ENCODE measurements at regions of chr6 and their contacts with region 1.

Region 1: GRCh38 chr6:108782179-108783041 is 65.8 kb upstream of the ARMC2 start:
- DNase-seq: peak; percentile 84
- ATAC-seq: peak; percentile 96
- H3K4me3 ChIP-seq: peak overlapping the region; percentile 43 to 78 (median 59)
- H3K4me3 Mint-ChIP-seq: peak overlapping the region; percentile 81
- H3K27ac ChIP-seq: no peak overlapping the region
- H3K27ac Mint-ChIP-seq: no peak overlapping the region
- H3K4me1 ChIP-seq: peaks cover 23 to 31% of the 10 kb centered on the region in 2 donors
- H3K4me1 Mint-ChIP-seq: peaks cover 25% of the 10 kb centered on the region
- H3K27me3 ChIP-seq: peaks cover 0 to 20% (median 8%) of the 10 kb centered on the region in 4 experiments
- H3K27me3 Mint-ChIP-seq: peaks cover 27% of the 10 kb centered on the region
- CTCF ChIP-seq: peak; percentile 84

Region 2: GRCh38 chr6:108541838-108542759 is 240.3 kb before region 1 on chr6:
- CTCF ChIA-PET with region 1: interaction called, 80 read pairs
- POLR2A ChIA-PET with region 1: no interaction called
- intact Hi-C with region 1: loop called (anchors 1 kb)
- DNase-seq: peak; percentile 87
- ATAC-seq: peak; percentile 84
- H3K4me3 ChIP-seq: no peak overlapping the region
- H3K4me3 Mint-ChIP-seq: no peak overlapping the region
- H3K27ac ChIP-seq: no peak overlapping the region
- H3K27ac Mint-ChIP-seq: no peak overlapping the region
- H3K4me1 ChIP-seq: peaks cover 15 to 17% of the 10 kb centered on the region in 2 donors
- H3K4me1 Mint-ChIP-seq: peaks cover 12% of the 10 kb centered on the region
- H3K27me3 ChIP-seq: peaks cover 0 to 2% (median 0%) of the 10 kb centered on the region in 4 experiments
- H3K27me3 Mint-ChIP-seq: peaks cover 9% of the 10 kb centered on the region
- CTCF ChIP-seq: peak; percentile 93

Region 3: DNA sequence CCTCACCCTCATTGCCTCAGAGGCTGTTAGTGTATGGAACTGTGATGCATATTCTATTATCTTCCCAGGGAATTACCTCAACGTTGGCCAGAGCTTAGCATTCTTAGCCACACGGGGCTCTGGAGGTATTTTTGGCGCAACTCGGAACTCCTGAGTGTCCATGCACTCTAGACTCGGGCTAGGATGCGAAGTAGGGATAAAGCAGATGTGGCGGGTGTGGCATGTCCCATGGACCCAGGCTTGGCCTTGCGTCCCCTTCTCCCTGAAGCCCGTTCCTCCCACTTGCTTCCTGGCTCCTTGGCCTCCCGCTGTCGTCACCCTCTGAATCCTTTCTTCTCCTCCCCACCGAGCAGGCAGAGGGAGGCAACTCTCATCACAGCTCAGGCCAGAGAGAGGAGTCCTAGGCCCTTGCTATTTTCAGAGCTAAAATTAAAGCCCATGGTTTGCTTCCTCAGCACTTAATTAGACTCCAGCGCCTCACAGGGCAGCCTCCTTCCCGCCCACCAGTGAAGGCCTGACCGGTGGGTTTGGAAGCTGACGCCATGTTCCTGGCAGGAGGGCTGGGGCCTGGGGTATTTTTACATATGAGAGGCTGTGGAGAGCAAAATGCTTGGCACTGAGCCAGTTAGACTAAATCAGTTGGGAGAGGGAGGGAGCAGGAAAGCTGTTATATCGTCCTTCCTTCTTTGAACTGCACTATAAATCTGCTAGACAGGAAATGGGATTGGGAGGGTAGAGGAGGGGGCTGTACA is 82.9 kb before region 1 on chr6:
- CTCF ChIA-PET with region 1: no interaction called
- POLR2A ChIA-PET with region 1: no interaction called
- intact Hi-C with region 1: no loop called
- DNase-seq: no peak
- ATAC-seq: no peak
- H3K4me3 ChIP-seq: no peak overlapping the region
- H3K4me3 Mint-ChIP-seq: no peak overlapping the region
- H3K27ac ChIP-seq: no peak overlapping the region
- H3K27ac Mint-ChIP-seq: no peak overlapping the region
- H3K4me1 ChIP-seq: no peaks in the 10 kb centered on the region
- H3K4me1 Mint-ChIP-seq: no peaks in the 10 kb centered on the region
- H3K27me3 ChIP-seq: no peaks in the 10 kb centered on the region
- H3K27me3 Mint-ChIP-seq: no peaks in the 10 kb centered on the region
- CTCF ChIP-seq: no peak